ENCODE measurements at regions of chr14 and their contacts with region 1.

Region 1: GRCh38 chr14:35404449-35405303 is at the start of gene NFKBIA:
- DNase-seq: peak; percentile 96
- H3K4me3 ChIP-seq: peak within 1 kb of the TSS; percentile 83 to 99 (median 96)
- H3K27ac ChIP-seq: peak within 1 kb of the TSS; percentile 97 to 100 (median 100)
- H3K4me1 ChIP-seq: peaks cover 0 to 56% (median 45%) of the 10 kb centered on the region in 4 donors
- H3K27me3 ChIP-seq: no peaks in the 10 kb centered on the region
- CTCF ChIP-seq: peak in 1 of 4 experiments; percentile 21
- EP300 ChIP-seq: peak in 1 of 4 donors; percentile 15
- POLR2A ChIP-seq: peak; percentile 65 to 70
- total RNA-seq, gene NFKBIA: 258 to 340 (median 289) TPM

Region 2: DNA sequence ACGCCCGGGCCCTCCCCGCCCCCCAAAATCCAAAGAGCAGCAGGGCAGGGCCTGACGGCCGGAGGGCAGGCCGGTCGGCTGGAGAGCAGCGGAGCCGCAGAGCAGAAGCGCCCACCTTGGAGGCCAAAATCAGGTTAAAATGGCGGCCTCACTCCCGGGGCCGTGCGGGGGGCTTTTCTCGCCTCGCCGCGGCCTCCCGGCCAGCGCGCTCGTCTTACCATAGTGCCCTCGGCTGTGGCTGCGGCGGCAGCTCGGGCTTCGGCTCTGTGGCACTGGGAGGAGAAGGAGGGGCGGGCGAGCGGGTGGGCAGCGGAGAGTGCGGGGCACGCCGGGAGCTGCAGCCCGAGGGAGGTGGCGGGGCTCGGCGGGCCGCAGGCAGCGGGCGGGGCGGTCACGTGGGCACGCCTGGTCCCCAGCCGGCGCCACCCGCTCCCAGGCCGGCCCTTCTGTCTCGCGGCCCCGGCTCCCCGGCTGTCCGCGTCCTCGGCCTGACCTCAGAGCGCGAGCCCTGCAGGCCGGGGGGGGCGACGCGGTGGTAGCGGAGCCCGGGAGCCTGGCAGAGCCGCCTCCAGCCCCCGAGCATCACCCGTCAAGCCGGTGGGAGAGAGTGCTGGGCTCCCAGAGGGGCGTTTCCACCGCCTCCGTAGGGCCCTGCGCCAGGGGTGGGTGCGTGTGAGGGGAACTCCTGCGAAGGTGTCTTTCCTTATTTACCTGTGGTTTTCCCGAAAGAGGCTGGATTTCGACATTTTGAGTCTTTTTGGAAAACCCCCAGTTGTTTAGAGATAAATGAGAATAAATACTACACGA is 690.2 kb before region 1 on chr14 and contains the start of gene CFL2:
- intact Hi-C with region 1: loop called (anchors 5 kb)
- DNase-seq: peak; percentile 93
- H3K4me3 ChIP-seq: peak within 1 kb of the TSS; percentile 85 to 99 (median 95)
- H3K27ac ChIP-seq: peak within 1 kb of the TSS; percentile 93 to 100 (median 99)
- H3K4me1 ChIP-seq: peaks cover 0 to 51% (median 38%) of the 10 kb centered on the region in 4 donors
- H3K27me3 ChIP-seq: no peaks in the 10 kb centered on the region
- CTCF ChIP-seq: no peak
- EP300 ChIP-seq: peak in 1 of 4 donors; percentile 1
- POLR2A ChIP-seq: peak; percentile 67 to 87
- total RNA-seq, gene CFL2: 251 to 380 (median 284) TPM

Region 3: DNA sequence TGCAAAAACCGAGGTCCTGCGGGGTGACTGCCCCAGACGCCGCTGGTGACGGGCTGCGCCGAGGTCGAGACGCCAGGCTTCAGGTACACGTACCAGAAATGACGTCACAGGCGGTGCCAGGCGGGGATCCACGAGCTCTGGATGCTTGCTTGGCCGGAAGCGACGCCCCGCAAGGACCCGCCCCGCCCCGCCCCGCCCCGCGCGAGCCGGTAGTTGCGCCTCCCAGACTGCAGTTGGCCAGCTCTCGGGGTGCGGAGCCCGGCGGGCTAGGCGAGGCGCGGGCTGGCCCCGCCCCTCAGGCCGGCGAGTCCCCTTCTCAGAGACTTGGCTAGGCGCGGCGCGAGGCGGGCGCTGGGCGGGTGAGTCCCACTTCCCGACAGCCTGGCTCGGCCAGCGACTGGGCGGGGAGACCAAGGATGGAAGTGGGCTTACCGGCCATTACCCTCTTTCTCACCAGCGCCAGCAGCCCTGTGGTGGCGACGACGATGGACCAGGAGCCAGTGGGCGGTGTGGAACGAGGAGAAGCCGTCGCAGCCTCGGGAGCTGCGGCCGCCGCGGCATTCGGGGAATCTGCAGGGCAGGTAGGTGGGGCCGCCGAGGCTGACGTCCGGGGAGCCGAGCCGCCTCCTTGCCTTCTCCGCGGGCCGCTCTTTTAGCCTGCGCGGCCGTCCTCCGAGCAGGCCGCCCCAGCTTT is 358.5 kb before region 1 on chr14 and contains the start of gene FAM177A1:
- intact Hi-C with region 1: loop called (anchors 5 kb)
- DNase-seq: peak; percentile 99
- H3K4me3 ChIP-seq: peak within 1 kb of the TSS; percentile 67 to 87 (median 82)
- H3K27ac ChIP-seq: peak within 1 kb of the TSS; percentile 93 to 98 (median 97)
- H3K4me1 ChIP-seq: peaks cover 0 to 29% (median 24%) of the 10 kb centered on the region in 4 donors
- H3K27me3 ChIP-seq: no peaks in the 10 kb centered on the region
- CTCF ChIP-seq: no peak
- EP300 ChIP-seq: peak in 2 of 4 donors; percentile 32 to 68
- POLR2A ChIP-seq: peak; percentile 62 to 91
- total RNA-seq, gene FAM177A1: 26.3 to 61.5 (median 40.8) TPM

Region 4: DNA sequence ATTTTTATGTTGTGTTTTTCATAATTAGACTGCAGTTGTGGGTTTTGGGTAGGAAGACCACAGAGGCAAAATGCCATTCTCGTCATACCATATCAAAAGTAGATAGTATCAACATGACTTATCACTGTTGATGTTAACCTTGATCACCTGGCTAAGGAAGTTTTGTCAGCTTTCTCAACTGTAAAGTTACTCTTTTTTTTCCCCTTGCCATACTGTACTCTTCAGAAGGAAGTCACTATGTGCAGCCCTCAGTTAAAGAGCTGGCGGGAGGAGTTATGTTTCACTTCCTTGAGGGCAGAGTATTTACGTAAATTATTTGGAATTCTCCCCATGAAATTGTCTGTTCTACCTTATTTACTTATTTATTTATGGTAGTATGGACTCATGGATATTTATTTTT is 203.6 kb before region 1 on chr14:
- intact Hi-C with region 1: no loop called
- DNase-seq: no peak
- H3K4me3 ChIP-seq: no peak overlapping the region
- H3K27ac ChIP-seq: no peak overlapping the region
- H3K4me1 ChIP-seq: no peaks in the 10 kb centered on the region
- H3K27me3 ChIP-seq: no peaks in the 10 kb centered on the region
- CTCF ChIP-seq: no peak
- EP300 ChIP-seq: no peak
- POLR2A ChIP-seq: no peak

Region 5: DNA sequence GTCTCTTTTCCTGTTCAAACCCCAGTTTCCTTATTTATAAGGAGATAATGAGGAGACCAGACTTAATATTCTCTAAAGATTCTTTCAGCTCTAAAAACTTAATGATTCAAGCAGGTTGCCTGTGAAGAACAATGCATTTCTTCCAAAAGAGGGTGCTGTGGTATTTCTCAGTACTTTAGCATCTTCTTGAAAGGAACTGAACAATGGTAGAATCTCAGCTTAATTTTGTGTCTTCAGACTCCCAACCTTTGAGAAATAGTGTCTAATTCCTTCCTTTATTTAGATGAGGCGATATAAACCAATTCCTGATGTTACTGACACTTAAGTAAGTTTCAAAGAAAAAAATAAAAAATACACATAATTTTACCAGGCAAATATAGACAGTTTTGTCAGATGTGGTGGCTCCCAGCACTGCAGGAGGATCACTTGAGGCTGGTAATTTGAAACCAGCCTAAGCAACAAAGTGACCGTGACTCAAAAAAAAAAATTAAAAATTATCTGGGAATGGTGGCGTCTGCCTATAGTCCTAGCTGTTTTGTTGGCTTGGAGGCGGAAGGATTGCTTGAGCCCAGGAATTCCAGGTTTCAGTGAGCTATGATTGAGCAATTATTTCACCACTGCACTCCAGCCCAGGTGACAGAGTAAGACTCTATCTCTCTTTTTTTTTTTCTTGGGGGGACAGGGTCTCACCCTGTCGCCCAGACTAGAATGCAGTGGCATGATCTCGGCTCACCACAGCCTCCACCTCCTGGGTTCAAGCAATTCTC is 189.4 kb before region 1 on chr14:
- intact Hi-C with region 1: loop called (anchors 2 kb)
- DNase-seq: no peak
- H3K4me3 ChIP-seq: no peak overlapping the region
- H3K27ac ChIP-seq: no peak overlapping the region
- H3K4me1 ChIP-seq: peaks cover 0 to 5% (median 2%) of the 10 kb centered on the region in 4 donors
- H3K27me3 ChIP-seq: no peaks in the 10 kb centered on the region
- CTCF ChIP-seq: peak; percentile 26 to 60 (median 50)
- EP300 ChIP-seq: no peak
- POLR2A ChIP-seq: no peak

Region 6: GRCh38 chr14:35292051-35292769 is 112.5 kb before region 1 on chr14 and contains the start of gene PSMA6:
- intact Hi-C with region 1: loop called (anchors 1 kb)
- DNase-seq: peak; percentile 99
- H3K4me3 ChIP-seq: peak within 1 kb of the TSS; percentile 77 to 89 (median 80)
- H3K27ac ChIP-seq: peak within 1 kb of the TSS; percentile 89 to 96 (median 92)
- H3K4me1 ChIP-seq: peaks cover 0 to 49% (median 40%) of the 10 kb centered on the region in 4 donors
- H3K27me3 ChIP-seq: no peaks in the 10 kb centered on the region
- CTCF ChIP-seq: no peak
- EP300 ChIP-seq: peak in 1 of 4 donors; percentile 70
- POLR2A ChIP-seq: peak; percentile 81 to 86
- total RNA-seq, gene PSMA6: 104 to 203 (median 169) TPM

Region 7: DNA sequence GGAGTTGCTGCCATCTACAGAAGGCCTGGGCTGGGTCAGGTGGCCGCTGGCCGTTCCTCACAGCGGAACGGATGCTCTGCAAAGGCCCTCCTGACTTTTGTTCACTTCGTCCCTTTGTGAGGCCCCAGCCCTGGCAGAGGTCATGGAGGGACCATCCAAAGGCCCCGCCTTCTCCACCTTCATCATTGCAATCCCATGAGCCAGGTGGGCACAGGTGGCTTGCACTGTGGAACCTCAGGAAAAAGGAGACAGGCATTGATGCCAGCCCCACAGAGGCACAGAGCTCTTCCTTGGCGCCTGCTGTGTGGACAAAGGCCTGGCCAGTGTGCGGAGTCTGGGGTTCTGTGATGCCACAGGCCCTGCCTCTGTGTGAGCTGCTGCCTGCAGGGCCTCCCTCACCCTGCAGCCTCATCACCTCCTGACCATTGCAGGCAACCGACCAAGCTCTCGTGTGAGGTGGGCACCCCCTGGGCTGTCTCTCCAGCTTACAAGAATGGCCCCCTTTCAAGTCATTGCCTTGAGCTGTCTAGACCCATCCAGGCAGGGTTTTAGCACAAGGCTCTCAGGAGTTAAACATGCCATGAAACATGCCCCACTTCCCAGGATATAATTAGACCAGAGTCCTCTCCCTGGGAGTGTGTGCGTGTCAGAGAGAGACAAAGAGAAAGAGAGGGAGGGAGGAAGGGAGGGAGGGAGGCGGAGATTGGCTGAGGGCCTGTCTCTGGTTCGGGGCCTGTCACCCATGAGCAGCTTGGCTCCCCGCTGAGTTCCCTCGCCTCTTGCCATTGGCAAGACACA is 19.4 kb before region 1 on chr14:
- intact Hi-C with region 1: loop called (anchors 1 kb)
- DNase-seq: peak; percentile 98
- H3K4me3 ChIP-seq: peak overlapping the region in 3 of 4 donors; percentile 10 to 33 (median 17)
- H3K27ac ChIP-seq: peak overlapping the region; percentile 91 to 97 (median 94)
- H3K4me1 ChIP-seq: peaks cover 5 to 44% (median 43%) of the 10 kb centered on the region in 4 donors
- H3K27me3 ChIP-seq: no peaks in the 10 kb centered on the region
- CTCF ChIP-seq: no peak
- EP300 ChIP-seq: peak in 2 of 4 donors; percentile 60 to 86
- POLR2A ChIP-seq: no peak

Region 8: GRCh38 chr14:35814371-35815005 is 409.8 kb after region 1 on chr14:
- intact Hi-C with region 1: no loop called
- DNase-seq: no peak
- H3K4me3 ChIP-seq: no peak overlapping the region
- H3K27ac ChIP-seq: no peak overlapping the region
- H3K4me1 ChIP-seq: no peaks in the 10 kb centered on the region
- H3K27me3 ChIP-seq: no peaks in the 10 kb centered on the region
- CTCF ChIP-seq: peak in 3 of 4 experiments; percentile 27 to 60 (median 28)
- EP300 ChIP-seq: no peak
- POLR2A ChIP-seq: no peak

Region 9: DNA sequence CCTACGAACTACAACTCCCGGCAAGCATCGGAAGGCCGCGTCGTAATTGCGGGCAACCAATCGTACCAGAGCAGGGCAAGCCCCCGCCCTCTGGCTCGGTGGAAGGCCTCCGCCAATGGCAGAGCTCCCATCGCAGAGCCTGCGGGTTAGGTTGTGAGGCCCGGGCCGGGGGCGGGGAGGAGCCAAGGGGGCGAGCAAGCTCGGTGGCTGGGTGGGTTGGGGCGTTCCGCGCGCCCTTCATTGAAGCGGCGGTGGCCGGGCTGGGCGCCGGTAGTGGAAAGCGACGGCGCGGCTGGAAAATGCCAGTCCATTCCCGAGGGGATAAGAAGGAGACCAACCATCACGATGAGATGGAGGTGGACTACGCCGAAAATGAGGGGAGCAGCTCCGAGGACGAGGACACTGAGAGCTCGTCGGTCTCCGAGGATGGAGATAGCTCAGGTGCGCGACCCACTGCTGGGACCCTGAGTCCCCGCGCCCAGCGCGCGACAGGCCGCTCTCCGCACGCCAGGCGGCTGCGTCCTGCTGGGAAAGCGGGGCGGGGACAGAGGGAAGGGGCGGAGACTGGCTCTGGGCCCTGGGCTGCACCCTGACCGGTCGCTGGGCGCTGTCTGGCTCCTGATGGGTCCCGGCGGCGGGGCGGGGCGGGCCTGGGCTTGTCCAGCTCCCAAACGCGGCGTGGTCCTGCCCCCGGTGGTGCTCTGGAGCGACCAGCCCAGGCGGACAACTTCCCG is 421.7 kb after region 1 on chr14 and contains the start of gene BRMS1L:
- intact Hi-C with region 1: loop called (anchors 10 kb)
- DNase-seq: peak; percentile 99
- H3K4me3 ChIP-seq: peak within 1 kb of the TSS; percentile 65 to 94 (median 88)
- H3K27ac ChIP-seq: peak within 1 kb of the TSS; percentile 95 to 99 (median 98)
- H3K4me1 ChIP-seq: peaks cover 0 to 13% (median 8%) of the 10 kb centered on the region in 4 donors
- H3K27me3 ChIP-seq: no peaks in the 10 kb centered on the region
- CTCF ChIP-seq: no peak
- EP300 ChIP-seq: no peak
- POLR2A ChIP-seq: peak; percentile 80 to 85
- total RNA-seq, gene BRMS1L: 5.8 to 10.5 (median 9.7) TPM

Measured in sigmoid colon (tissue), 7 donors.